Calu3 (cell line): ENCODE measurements at regions of chr7 and their contacts with region 1.

Region 1: GRCh38 chr7:3695602-3696001 is 394.6 kb downstream of the SDK1 start:
- DNase-seq: peak; percentile 25
- H3K4me3 Mint-ChIP-seq: no peak overlapping the region
- H3K27ac Mint-ChIP-seq: no peak overlapping the region
- H3K4me1 Mint-ChIP-seq: peaks cover 11% of the 10 kb centered on the region
- H3K27me3 Mint-ChIP-seq: no peaks in the 10 kb centered on the region
- CTCF ChIP-seq: peak; percentile 29

Region 2: GRCh38 chr7:3399858-3400257 is 295.7 kb before region 1 on chr7:
- CTCF ChIA-PET with region 1: no interaction called
- intact Hi-C with region 1: no loop called
- DNase-seq: peak; percentile 39
- H3K4me3 Mint-ChIP-seq: no peak overlapping the region
- H3K27ac Mint-ChIP-seq: no peak overlapping the region
- H3K4me1 Mint-ChIP-seq: peaks cover 19% of the 10 kb centered on the region
- H3K27me3 Mint-ChIP-seq: no peaks in the 10 kb centered on the region
- CTCF ChIP-seq: peak; percentile 47

Region 3: DNA sequence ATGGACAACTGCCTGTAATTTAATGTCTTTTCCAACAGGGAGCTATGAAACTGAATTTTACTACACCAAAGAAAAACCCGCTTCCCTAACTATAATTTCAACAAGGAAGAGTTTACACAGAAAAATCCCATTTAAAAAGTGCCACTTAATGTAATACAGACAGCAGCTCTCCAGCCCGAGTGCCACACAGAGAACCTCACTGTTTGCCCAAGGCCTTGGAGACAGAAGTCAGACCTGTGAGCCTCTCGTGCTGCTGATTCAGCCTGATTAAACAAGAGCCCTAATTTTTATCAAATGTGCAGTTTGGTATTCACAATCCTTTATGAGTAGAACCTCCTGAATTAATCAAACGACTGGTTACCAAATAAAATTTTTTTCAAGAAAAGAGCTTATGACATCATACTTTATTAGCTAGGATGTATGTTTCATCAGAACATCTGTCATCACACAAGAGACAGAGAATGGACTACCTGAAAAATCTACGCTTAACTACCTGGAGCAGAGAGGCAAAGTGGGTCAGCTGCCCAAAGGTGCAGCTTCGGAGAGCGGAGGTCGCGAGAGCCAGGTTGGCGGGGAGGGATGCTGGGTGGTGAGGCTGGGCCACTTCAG is 149.0 kb after region 1 on chr7:
- CTCF ChIA-PET with region 1: no interaction called
- intact Hi-C with region 1: no loop called
- DNase-seq: no peak
- H3K4me3 Mint-ChIP-seq: no peak overlapping the region
- H3K27ac Mint-ChIP-seq: no peak overlapping the region
- H3K4me1 Mint-ChIP-seq: no peaks in the 10 kb centered on the region
- H3K27me3 Mint-ChIP-seq: no peaks in the 10 kb centered on the region
- CTCF ChIP-seq: no peak

Region 4: GRCh38 chr7:3897438-3898385 is 202.1 kb after region 1 on chr7:
- CTCF ChIA-PET with region 1: no interaction called
- intact Hi-C with region 1: loop called (anchors 1 kb)
- DNase-seq: peak; percentile 63
- H3K4me3 Mint-ChIP-seq: no peak overlapping the region
- H3K27ac Mint-ChIP-seq: no peak overlapping the region
- H3K4me1 Mint-ChIP-seq: peaks cover 31% of the 10 kb centered on the region
- H3K27me3 Mint-ChIP-seq: no peaks in the 10 kb centered on the region
- CTCF ChIP-seq: peak; percentile 85